ACHN (cell line): ENCODE measurements at regions of chr2 and their contacts with region 1.

Region 1: DNA sequence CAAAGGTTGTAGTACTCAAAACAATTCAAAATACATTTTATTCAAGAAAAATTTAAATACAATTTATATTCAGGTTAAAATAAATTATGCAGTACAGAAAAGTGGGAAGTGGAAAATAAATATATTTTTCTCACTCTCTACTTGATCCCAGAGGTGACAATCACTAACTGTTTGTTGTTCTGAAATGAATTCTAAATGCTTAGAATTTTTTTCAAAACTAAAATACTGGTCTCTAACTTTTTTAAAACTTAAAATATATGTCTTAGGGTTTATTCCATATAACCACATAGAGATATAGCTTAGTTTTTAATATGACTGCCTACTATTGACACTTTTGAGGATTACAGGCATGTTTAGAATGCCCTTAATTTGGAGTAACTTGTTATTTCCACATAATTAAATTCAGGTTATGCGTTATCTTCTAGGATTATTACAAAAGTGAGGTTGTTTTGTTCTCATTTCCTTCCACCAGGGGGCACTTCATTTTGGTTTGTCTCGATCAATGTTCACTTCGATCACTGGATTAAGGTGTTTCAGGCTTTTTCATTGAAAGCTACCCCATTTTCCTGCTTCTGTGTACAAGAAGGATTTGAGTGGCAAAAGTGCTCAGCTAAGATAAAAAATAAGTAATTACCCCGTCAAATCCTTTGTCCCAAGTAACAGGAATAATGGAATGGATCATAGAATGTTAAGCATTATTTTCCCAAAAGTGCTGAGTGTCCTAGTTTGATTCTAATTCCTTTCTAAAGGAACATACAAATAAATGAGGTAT is 27.1 kb upstream of the TFPI start:
- DNase-seq: peak; percentile 75

Region 2: GRCh38 chr2:187493877-187494568 is 87.3 kb before region 1 on chr2:
- in situ Hi-C with region 1: no loop called
- DNase-seq: no peak

Region 3: GRCh38 chr2:187842978-187843847 is 261.9 kb after region 1 on chr2:
- in situ Hi-C with region 1: loop called (anchors 25 kb)
- DNase-seq: peak; percentile 80